ENCODE measurements at regions of chr6 and their contacts with region 1.

Region 1: DNA sequence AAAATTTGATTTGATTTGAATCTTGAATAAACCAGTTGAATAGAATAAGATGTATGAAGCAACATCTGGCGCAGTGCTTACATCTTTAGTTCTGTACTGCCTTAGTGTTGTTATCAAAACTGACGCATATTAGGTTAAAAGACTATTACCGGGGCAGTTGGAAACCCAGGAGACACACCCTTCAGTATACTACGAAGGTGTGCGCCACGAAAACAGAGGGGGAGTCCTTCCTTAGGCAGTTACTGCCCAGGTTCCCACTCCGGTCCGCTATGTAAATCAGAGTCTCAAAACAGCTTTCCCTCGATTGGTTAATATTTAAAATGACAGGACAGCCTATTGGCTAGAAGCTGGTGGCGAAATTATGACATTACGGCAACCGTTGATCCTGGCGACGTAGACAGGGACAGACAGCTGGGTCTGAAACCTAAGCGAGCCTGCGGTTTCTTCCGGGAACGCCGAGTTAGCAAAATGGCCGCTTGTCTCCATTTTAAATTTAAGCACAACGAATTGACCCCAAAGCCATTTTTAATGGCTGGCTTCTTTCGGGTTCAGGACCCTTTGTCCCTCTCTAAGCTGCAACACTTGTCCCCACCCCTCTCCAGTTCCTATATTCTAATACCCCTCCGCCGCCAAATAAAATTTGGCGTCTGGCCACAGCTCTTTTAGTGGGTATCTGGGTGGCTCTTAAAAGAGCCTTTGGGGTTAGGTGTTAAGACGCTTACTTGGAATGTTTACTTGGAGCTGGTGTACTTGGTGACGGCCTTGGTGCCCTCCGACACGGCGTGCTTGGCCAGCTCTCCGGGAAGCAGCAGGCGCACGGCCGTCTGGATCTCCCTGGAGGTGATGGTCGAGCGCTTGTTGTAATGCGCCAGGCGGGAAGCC is 35.8 kb downstream of the HFE start:
- DNase-seq: peak; percentile 95
- H3K4me3 Mint-ChIP-seq: peak overlapping the region; percentile 95
- H3K27ac Mint-ChIP-seq: peak overlapping the region; percentile 100
- H3K4me1 Mint-ChIP-seq: peaks cover 34% of the 10 kb centered on the region
- H3K27me3 Mint-ChIP-seq: peaks cover 8% of the 10 kb centered on the region

Region 2: DNA sequence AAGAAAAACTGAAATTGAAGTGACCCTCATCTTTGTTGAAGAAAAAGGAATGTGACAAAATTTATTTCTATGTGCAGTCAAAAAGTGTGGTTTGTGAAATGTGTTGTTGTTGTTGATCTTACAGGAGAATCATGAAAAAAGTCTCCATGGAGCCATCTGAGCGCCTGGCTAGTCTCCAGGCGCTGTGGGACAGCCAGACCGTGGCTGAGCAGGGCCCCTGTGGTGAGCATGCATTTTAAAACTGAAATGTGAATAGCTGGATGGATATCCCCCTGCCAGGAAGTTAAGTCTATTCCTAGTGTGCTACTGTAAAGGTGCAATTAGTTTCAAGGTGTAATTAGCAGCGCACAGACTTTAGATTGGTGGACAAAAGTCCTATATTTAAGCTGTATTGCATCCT is 673.3 kb before region 1 on chr6:
- CTCF ChIA-PET with region 1: no interaction called
- POLR2A ChIA-PET with region 1: no interaction called
- intact Hi-C with region 1: no loop called
- DNase-seq: no peak
- H3K4me3 Mint-ChIP-seq: no peak overlapping the region
- H3K27ac Mint-ChIP-seq: no peak overlapping the region
- H3K4me1 Mint-ChIP-seq: peaks cover 4% of the 10 kb centered on the region
- H3K27me3 Mint-ChIP-seq: no peaks in the 10 kb centered on the region

Region 3: GRCh38 chr6:25942561-25943147 is 180.4 kb before region 1 on chr6:
- CTCF ChIA-PET with region 1: no interaction called
- POLR2A ChIA-PET with region 1: no interaction called
- intact Hi-C with region 1: no loop called
- DNase-seq: no peak
- H3K4me3 Mint-ChIP-seq: no peak overlapping the region
- H3K27ac Mint-ChIP-seq: no peak overlapping the region
- H3K4me1 Mint-ChIP-seq: peaks cover 25% of the 10 kb centered on the region
- H3K27me3 Mint-ChIP-seq: peaks cover 4% of the 10 kb centered on the region

Region 4: DNA sequence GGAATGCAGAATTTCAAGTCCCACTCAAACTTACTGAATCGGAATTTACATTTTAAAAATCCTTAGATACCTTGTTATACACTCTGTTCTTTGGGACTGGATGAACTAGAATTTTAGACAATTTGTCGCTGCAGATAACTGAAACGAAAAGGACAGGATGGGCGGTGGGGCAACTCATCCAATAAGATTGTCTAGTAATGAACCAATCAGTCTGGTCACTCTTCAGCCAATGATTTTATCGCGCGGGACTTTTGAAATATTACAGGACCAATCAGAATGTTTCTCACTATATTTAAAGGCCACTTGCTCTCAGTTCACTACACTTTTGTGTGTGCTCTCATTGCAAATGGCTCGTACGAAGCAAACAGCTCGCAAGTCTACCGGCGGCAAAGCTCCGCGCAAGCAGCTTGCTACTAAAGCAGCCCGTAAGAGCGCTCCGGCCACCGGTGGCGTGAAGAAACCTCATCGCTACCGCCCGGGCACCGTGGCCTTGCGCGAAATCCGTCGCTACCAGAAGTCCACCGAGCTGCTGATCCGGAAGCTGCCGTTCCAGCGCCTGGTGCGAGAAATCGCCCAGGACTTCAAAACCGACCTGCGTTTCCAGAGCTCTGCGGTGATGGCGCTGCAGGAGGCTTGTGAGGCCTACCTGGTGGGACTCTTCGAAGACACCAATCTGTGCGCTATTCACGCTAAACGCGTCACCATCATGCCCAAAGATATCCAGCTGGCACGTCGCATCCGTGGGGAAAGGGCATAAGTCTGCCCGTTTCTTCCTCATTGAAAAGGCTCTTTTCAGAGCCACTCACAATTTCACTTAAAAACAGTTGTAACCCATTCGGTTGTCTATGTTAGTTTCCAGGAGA is 77.7 kb before region 1 on chr6:
- CTCF ChIA-PET with region 1: interaction called, 3 read pairs
- POLR2A ChIA-PET with region 1: interaction called, 133 read pairs
- intact Hi-C with region 1: loop called (anchors 1 kb)
- DNase-seq: peak; percentile 81
- H3K4me3 Mint-ChIP-seq: peak overlapping the region; percentile 81
- H3K27ac Mint-ChIP-seq: peak overlapping the region; percentile 97
- H3K4me1 Mint-ChIP-seq: peaks cover 17% of the 10 kb centered on the region
- H3K27me3 Mint-ChIP-seq: peaks cover 8% of the 10 kb centered on the region

Region 5: GRCh38 chr6:26136321-26136720 is 13.3 kb after region 1 on chr6:
- CTCF ChIA-PET with region 1: no interaction called
- POLR2A ChIA-PET with region 1: interaction called, 16 read pairs
- intact Hi-C with region 1: no loop called
- DNase-seq: no peak
- H3K4me3 Mint-ChIP-seq: no peak overlapping the region
- H3K27ac Mint-ChIP-seq: no peak overlapping the region
- H3K4me1 Mint-ChIP-seq: peaks cover 9% of the 10 kb centered on the region
- H3K27me3 Mint-ChIP-seq: no peaks in the 10 kb centered on the region

Region 6: DNA sequence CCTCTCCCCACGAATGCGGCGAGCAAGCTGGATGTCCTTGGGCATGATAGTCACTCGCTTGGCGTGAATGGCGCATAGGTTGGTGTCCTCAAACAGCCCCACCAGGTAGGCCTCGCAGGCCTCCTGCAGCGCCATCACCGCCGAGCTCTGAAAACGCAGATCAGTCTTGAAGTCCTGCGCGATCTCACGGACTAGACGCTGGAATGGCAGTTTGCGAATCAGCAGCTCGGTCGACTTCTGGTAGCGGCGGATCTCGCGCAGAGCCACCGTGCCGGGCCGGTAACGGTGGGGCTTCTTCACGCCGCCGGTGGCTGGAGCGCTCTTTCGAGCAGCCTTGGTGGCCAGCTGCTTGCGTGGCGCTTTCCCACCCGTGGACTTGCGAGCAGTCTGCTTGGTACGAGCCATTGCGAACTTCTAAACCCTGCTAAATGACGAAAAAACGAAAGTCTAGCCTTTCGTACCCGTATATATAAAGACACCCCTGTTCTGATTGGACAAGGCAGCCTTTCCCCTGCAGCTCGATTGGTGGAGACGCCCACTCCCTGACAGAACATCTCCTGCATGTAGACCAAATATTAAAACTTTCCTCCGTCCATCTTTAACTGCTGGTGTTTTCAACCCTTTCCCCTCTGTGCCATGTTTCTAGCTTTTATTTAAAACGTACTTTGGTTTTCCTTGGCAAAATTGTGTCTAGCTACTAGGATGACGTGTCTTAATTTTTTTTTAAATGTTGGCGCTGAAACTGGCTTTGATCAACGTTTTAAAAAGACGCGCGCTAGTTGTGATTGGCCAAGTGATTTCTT is 74.0 kb after region 1 on chr6:
- CTCF ChIA-PET with region 1: interaction called, 4 read pairs
- POLR2A ChIA-PET with region 1: interaction called, 163 read pairs
- intact Hi-C with region 1: loop called (anchors 1 kb)
- DNase-seq: peak; percentile 84
- H3K4me3 Mint-ChIP-seq: peak overlapping the region; percentile 86
- H3K27ac Mint-ChIP-seq: peak overlapping the region; percentile 99
- H3K4me1 Mint-ChIP-seq: peaks cover 31% of the 10 kb centered on the region
- H3K27me3 Mint-ChIP-seq: peaks cover 3% of the 10 kb centered on the region

Region 7: DNA sequence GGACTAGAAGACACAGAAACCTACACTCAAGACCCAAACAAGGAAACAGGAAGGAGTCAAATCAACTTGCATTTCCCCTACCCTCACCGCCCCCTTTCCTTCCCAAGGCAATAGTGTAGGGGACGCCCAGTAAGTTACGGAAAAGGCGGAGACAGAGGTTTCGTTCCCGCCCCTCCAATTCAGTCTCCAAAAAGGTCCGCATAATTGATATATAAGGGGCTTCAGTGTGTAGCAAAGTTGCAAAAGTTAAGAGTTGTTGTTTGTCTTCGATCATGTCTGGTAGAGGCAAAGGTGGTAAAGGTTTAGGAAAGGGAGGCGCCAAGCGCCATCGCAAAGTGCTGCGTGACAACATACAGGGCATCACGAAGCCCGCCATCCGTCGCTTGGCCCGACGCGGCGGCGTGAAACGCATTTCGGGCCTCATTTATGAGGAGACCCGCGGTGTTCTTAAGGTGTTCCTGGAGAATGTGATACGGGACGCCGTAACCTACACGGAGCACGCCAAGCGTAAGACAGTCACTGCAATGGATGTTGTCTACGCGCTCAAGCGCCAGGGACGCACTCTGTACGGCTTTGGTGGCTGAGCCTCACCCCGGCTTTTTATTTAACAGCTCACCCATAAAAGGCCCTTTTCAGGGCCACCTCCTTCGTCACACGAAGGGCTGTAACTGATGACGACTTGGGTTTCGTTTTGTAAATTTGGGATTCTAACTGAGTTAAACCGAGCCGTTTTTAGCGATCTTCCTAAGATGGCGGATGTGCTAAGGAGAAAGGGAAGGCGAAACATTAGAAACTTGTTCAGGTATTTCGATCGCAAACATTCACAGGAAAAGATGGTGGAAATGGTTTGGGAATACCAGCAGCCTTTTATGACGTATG is 117.4 kb after region 1 on chr6:
- CTCF ChIA-PET with region 1: no interaction called
- POLR2A ChIA-PET with region 1: interaction called, 53 read pairs
- intact Hi-C with region 1: loop called (anchors 2 kb)
- DNase-seq: peak; percentile 85
- H3K4me3 Mint-ChIP-seq: peak overlapping the region; percentile 70
- H3K27ac Mint-ChIP-seq: peak overlapping the region; percentile 91
- H3K4me1 Mint-ChIP-seq: peaks cover 20% of the 10 kb centered on the region
- H3K27me3 Mint-ChIP-seq: peaks cover 4% of the 10 kb centered on the region

Region 8: DNA sequence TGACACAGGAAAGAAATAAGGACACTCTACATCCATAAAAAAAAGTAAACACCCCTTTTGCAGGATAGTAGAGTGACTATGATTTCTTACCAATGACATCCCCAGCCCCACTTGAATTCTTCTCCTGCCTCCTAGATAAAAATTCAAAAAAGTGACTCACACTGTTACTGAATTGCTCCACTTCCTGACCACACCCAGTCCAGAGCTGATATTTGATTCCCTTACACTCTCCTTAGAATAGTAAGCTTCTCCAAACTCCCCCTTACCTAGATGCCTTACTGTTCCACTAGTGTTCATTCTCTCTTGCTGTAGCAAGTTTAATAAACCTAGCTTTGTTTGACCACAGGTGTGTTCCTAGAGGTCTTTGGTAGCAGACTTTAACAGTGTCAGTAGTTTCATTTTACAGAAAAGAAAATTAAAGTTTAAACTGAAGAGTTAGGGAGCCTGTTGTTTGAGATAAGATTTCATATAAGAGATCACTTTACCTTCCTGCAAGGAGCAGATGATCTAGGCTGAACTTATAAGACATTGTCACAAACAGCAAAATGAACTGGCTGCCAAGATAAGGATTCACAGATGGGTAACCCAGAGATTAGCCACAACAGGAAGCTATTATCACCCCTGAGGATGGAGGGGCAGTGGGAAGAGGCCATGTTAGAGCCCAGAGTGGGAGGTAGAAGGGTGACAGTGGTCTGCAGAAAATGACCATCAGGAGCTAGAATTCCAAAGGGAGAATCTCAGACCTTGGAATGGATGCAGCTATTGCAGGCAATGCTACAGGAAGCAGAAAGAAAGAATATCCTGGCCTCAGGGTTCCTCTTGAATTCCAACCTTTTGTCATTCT is 213.5 kb after region 1 on chr6:
- CTCF ChIA-PET with region 1: no interaction called
- POLR2A ChIA-PET with region 1: no interaction called
- intact Hi-C with region 1: no loop called
- DNase-seq: no peak
- H3K4me3 Mint-ChIP-seq: peak overlapping the region; percentile 20
- H3K27ac Mint-ChIP-seq: peak overlapping the region; percentile 30
- H3K4me1 Mint-ChIP-seq: peaks cover 17% of the 10 kb centered on the region
- H3K27me3 Mint-ChIP-seq: peaks cover 11% of the 10 kb centered on the region

Region 9: GRCh38 chr6:26363882-26364701 is 241.1 kb after region 1 on chr6:
- CTCF ChIA-PET with region 1: no interaction called
- POLR2A ChIA-PET with region 1: no interaction called
- intact Hi-C with region 1: no loop called
- DNase-seq: peak; percentile 18
- H3K4me3 Mint-ChIP-seq: no peak overlapping the region
- H3K27ac Mint-ChIP-seq: no peak overlapping the region
- H3K4me1 Mint-ChIP-seq: peaks cover 54% of the 10 kb centered on the region
- H3K27me3 Mint-ChIP-seq: no peaks in the 10 kb centered on the region

Region 10: GRCh38 chr6:27132532-27133280 is 1009.7 kb after region 1 on chr6:
- CTCF ChIA-PET with region 1: no interaction called
- POLR2A ChIA-PET with region 1: interaction called, 5 read pairs
- intact Hi-C with region 1: loop called (anchors 1 kb)
- DNase-seq: peak; percentile 95
- H3K4me3 Mint-ChIP-seq: no peak overlapping the region
- H3K27ac Mint-ChIP-seq: no peak overlapping the region
- H3K4me1 Mint-ChIP-seq: peaks cover 16% of the 10 kb centered on the region
- H3K27me3 Mint-ChIP-seq: peaks cover 2% of the 10 kb centered on the region

Region 11: GRCh38 chr6:27893059-27893835 is 1770.2 kb after region 1 on chr6:
- CTCF ChIA-PET with region 1: no interaction called
- POLR2A ChIA-PET with region 1: interaction called, 11 read pairs
- intact Hi-C with region 1: no loop called
- DNase-seq: peak; percentile 95
- H3K4me3 Mint-ChIP-seq: no peak overlapping the region
- H3K27ac Mint-ChIP-seq: no peak overlapping the region
- H3K4me1 Mint-ChIP-seq: peaks cover 32% of the 10 kb centered on the region
- H3K27me3 Mint-ChIP-seq: peaks cover 7% of the 10 kb centered on the region

Measured in activated CD4-positive, alpha-beta memory T cell treated with anti-CD3 and anti-CD28 coated beads for 36 hours (primary cell).